Activated T-helper 1 cell treated with anti-CD3 and anti-CD28 coated beads, Interleukin-12 subunit alpha, Interleukin-12 subunit beta, Interleukin-2, Interleukin-4 antibody, amounts not matched to agents 30 ng/mL and 10 ng/mL and 1 ng/mL, durations not matched to agents 14 hours and 24 hours and 36 hours (primary cell): ENCODE measurements at regions of chr20 and their contacts with region 1.

Region 1: GRCh38 chr20:43448748-43449535 is 8.8 kb upstream of the SRSF6 start:
- DNase-seq: peak; percentile 20
- H3K4me3 Mint-ChIP-seq: no peak overlapping the region
- H3K27ac Mint-ChIP-seq: no peak overlapping the region
- H3K4me1 Mint-ChIP-seq: peaks cover 3% of the 10 kb centered on the region
- H3K27me3 Mint-ChIP-seq: peaks cover 29% of the 10 kb centered on the region

Region 2: DNA sequence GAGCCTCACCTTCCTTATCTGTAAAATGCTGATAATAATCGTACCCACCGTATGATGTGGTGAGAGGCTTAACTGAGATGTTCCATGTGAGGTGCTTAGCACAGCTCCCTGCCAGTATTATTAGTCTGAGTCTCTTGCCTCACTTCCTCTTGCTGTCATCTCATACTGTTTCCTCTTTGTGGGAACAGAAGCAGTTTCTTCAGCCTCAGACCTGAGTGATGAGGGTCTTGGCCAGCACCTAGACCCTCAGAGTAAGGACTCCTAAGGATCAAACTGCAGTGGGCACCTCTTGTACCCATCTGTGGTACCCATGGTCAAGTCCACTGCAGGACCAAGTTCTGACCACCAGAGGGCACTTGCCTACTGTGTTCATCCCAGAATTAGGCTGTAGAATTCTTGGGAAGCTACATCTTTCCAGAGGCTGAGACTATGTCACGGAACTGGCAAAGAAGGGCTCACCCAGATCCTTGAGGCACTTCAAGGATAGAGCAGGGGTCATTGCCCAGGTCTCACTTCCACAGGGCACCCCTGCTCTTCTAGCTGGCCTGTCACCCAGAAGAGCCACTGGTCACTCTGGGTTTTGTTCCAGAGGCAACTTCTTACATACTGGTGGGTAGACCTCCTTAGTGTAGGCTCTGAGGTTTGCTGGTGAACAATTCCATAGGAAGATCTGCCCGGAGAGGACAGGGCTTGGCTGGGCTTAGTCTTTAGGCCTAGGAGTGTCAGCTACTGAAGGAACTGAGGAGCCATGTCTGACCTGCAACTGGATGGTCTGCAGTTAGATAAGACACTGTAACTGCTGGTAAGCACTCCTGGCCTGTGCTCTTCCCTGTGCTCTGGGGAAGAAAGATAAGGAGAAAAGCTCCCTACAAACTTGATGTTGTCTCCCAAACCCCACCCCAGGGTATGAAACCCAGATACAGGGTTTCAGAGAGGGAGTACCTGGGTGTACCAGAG is 89.3 kb after region 1 on chr20:
- intact Hi-C with region 1: loop called (anchors 1 kb)
- DNase-seq: peak; percentile 18
- H3K4me3 Mint-ChIP-seq: no peak overlapping the region
- H3K27ac Mint-ChIP-seq: no peak overlapping the region
- H3K4me1 Mint-ChIP-seq: no peaks in the 10 kb centered on the region
- H3K27me3 Mint-ChIP-seq: no peaks in the 10 kb centered on the region

Region 3: GRCh38 chr20:43691928-43692524 is 243.1 kb after region 1 on chr20:
- intact Hi-C with region 1: loop called (anchors 1 kb)
- DNase-seq: peak; percentile 29
- H3K4me3 Mint-ChIP-seq: no peak overlapping the region
- H3K27ac Mint-ChIP-seq: no peak overlapping the region
- H3K4me1 Mint-ChIP-seq: peaks cover 11% of the 10 kb centered on the region
- H3K27me3 Mint-ChIP-seq: no peaks in the 10 kb centered on the region

Region 4: DNA sequence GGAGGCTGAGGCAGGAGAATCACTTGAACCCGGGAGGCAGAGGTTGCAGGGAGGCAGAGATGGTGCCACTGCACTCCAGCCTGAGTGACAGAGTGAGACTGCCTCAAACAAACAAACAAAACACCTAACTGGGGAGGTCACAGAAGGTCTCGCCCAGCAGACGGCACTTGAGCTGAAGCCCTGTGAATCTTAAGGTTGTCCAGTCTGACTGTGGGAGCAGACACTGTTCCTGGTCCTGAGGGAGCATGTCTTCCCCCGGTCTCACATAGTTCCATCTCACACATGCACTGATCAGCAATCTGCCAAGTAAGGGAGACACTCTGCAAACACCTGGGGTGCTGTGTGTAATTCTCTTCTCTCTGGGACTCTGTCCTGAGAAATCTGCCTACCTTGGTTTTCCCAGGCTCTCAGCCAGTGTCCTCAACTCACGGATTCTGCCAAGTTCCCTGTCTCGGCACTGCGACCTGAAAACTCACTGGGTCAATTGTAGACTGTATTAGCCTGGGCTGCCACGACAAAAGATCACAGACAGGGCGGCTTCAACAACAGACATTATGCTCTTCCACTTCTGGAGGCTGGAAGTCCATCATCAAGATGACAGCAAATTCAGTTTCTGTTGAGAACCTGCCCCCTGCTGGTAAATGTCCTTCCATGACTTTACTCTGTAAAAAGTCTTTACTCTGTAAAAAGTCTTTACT is 643.8 kb after region 1 on chr20:
- intact Hi-C with region 1: loop called (anchors 1 kb)
- DNase-seq: no peak
- H3K4me3 Mint-ChIP-seq: no peak overlapping the region
- H3K27ac Mint-ChIP-seq: peak overlapping the region; percentile 9
- H3K4me1 Mint-ChIP-seq: peaks cover 4% of the 10 kb centered on the region
- H3K27me3 Mint-ChIP-seq: peaks cover 2% of the 10 kb centered on the region

Region 5: GRCh38 chr20:44187051-44187762 is 738.3 kb after region 1 on chr20 and contains the start of gene JPH2:
- intact Hi-C with region 1: loop called (anchors 1 kb)
- DNase-seq: no peak
- H3K4me3 Mint-ChIP-seq: peak within 1 kb of the TSS; percentile 45
- H3K27ac Mint-ChIP-seq: no peak within 1 kb of the TSS
- H3K4me1 Mint-ChIP-seq: no peaks in the 10 kb centered on the region
- H3K27me3 Mint-ChIP-seq: peaks cover 41% of the 10 kb centered on the region
- total RNA-seq, gene JPH2: not detected in 2 replicates